Right ventricle myocardium superior (tissue), 1 donor: ENCODE measurements at regions of chr16 and their contacts with region 1.

Region 1: GRCh38 chr16:57300387-57301125 is 16.1 kb upstream of the PLLP start:
- DNase-seq: peak; percentile 99
- ATAC-seq: peak; percentile 95

Region 2: DNA sequence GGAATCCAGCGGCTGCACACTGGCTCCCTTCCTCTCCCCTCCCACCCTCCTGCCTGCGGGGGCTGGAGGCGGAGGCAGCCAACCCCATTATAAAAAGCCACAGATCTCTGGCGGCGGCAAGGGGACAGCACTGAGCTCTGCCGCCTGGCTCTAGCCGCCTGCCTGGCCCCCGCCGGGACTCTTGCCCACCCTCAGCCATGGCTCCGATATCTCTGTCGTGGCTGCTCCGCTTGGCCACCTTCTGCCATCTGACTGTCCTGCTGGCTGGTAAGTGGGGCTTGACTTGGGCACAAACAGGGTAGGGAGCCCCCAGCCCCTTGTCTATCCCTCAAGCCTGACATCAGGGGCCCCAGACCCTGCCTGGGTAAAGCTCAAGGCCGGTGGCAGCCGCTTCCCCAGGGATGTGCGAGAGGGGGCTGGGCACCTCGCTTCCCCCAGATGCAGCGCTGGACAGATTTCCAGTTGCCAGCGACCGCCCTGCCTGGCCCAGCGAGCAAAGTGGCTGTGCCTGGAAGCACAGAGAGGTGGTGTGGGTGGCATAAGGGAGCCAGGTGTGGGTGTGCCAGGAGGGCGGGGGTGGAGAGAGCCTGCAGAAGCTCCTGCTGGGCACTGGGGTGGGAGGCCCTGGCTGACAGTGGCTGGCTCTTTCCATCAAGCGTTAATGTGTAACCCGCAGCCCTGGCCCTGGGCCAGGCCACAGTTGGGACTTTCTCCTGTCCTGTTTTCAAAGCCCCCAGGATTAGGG is 72.0 kb after region 1 on chr16 and contains the start of gene CX3CL1:
- intact Hi-C with region 1: loop called (anchors 5 kb)
- DNase-seq: peak; percentile 67
- ATAC-seq: peak; percentile 84
- total RNA-seq, gene CX3CL1: 11.6 TPM

Region 3: DNA sequence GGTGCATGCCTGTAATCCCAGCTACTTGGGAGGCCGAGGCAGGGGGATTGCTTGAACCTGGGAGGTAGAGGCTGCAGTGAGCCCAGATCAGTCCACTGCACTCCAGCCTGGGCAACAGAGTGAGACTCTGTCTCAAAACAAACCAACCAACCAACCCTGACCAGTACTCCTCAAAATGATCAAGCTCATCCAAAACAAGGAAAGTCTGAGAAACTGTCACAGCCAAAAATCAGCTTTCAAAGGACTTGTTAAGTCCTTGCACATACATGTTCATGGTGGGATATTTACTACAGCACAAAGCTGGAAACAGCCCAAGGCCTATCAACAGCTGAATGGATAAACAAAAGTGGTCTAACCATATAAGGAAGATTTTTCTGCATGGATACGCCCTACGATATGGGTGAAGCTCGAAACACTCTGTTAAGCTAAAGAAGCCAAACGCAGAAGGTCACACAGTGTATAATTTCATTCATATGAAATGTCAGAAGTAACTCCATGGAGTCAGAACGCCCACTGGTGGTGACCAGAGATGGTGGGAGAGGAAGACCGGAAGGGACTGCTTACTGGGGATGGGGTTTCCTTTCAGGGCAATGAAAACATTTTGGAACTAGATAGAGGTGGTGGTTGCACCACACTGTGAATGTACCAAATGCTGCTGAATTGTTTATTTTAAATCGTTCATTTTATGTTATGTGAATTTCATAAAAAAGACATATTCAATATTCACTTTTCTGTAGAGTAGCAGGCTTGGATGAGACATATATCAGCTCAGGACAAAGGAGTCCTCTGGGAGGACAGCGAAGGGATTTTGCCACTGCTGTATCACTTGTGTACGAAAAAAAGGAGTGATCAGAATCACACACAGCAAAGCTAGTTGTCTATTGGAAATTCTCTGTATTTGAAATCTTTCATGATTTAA is 121.7 kb after region 1 on chr16:
- intact Hi-C with region 1: loop called (anchors 1 kb)
- DNase-seq: no peak
- ATAC-seq: peak; percentile 40

Region 4: DNA sequence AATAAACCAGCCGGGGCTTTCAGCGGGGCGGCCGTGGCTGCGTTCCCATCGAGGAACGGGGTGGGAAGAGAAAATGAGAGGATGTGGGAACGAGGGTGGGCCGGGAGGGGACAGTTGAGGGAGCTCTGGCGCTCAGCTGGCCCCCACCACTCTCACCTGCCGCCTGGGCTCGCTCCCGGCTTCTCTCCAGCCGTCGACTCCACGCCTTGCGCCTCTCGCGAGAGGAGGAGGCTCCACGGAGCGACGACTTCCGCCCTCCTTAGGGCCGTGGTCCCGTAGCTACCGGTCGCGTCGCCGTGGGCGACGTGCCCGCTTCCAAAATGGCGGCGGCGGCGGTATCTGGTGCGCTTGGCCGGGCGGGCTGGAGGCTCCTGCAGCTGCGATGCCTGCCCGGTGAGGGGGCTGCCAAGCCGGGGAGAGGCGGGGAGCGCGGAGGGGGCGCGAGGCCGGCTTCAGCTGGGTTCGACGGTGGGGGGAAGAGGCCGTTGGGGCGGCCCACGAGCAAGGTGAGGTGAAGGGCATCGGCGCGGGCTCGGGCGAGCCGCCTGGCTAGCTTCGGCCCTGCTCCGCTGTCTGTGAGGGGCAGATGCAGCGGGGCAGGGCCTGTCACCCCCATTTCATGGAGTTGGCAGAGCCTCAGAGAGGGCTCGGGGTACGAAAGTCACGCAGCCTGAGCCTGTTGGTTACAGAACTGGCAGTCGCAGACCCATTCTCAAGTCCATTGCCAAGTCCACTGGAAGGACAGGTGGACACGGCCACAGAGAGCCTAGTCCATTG is 146.8 kb after region 1 on chr16 and contains the starts of genes CIAPIN1 and COQ9:
- intact Hi-C with region 1: no loop called
- DNase-seq: peak; percentile 98
- ATAC-seq: peak; percentile 99
- total RNA-seq, gene CIAPIN1: 41.8 TPM
- total RNA-seq, gene COQ9: 225 TPM

Region 5: DNA sequence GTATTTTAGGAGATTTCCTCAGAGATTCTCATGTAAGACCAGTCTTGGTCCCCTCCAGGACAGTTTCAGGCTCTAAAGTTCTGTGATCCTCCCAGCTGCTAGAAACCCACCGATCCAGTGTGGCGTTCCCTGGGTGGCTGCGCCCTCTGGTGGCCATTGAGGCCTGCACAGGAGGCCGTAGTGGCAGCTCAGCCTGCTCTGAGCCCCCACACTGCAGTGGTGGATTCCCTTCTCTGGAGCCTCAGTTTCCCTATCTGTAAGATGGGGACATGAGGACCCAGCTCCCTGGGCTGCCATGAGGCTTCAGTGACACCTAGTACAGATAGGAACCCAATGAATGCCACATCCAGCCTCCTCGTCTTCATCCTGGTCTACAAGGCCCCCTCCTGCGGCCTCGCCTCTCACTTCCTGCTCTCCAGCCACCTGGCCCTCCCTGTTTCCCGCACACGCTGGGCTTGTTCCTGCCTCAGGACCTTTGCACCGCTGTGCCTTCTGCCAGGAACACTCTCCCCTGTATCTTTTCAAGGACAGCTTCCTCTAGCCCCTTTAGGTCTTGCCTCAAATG is 219.3 kb after region 1 on chr16:
- intact Hi-C with region 1: loop called (anchors 5 kb)
- DNase-seq: peak; percentile 88
- ATAC-seq: peak; percentile 82